ENCODE measurements at regions of chr22 and their contacts with region 1.

Region 1: DNA sequence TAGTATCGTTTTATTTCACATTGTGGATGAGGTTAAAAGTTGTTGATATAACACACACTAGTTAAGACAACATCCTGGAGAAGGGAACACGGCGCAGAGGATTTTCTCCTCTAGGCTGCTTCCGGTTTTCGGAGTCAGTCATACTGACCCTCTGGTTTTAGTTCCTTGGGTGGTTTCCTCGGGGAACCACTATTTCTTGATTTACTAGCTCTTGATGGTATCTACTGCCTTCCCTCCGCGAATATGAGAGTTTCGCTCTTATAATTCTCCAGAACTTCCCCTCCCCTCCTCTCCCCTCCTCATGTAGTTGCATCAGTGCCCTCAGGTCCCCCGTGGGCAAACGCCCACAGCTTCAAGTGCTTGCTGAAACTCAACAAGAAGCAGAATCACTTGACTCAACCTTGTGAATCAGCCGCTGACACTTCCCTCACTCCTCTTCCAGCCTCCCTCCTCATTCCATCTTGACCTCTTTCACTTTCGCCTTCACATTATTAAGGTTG is 15.9 kb upstream of the APOBEC3A start:
- DNase-seq: peak; percentile 63 to 90 (median 87)
- H3K4me3 ChIP-seq: peak overlapping the region in 6 of 7 experiments; percentile 20 to 76 (median 54)
- H3K27ac ChIP-seq: no peak overlapping the region
- H3K4me1 ChIP-seq: peaks cover 16 to 28% (median 27%) of the 10 kb centered on the region in 4 experiments
- H3K27me3 ChIP-seq: peaks cover 0 to 6% (median 0%) of the 10 kb centered on the region in 5 experiments

Region 2: GRCh38 chr22:38843201-38843715 is 98.3 kb before region 1 on chr22:
- CTCF ChIA-PET with region 1: no interaction called
- POLR2A ChIA-PET with region 1: no interaction called
- DNase-seq: peak; percentile 78 to 89 (median 87)
- H3K4me3 ChIP-seq: peak overlapping the region; percentile 11 to 68 (median 53)
- H3K27ac ChIP-seq: no peak overlapping the region
- H3K4me1 ChIP-seq: peaks cover 0 to 21% (median 15%) of the 10 kb centered on the region in 4 experiments
- H3K27me3 ChIP-seq: peaks cover 0 to 41% (median 35%) of the 10 kb centered on the region in 5 experiments

Region 3: DNA sequence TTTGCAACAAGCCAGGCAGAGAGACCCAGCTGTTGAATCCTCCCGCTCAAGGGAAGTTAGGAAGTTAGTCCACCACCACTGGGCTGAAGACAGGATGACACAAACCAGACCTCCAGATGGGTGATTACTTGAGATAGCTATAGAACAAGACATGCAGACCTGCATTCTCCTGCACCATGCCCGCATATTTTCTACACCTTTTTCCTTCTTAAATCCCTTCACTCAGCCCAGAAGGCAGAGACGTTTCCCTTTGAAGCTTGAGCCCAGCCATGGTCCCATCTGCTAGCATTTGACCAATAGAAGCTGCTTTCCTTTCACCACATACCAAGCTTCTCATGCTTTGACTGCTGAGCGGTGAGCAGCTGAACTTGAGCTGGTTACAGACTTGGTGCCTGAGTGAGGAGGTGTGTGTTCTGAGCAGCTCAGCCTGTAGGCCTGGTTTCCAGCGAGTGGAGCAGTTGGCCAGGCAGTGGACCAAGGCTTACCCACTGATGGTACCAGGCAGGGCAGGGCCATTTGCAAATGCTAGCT is 40.4 kb before region 1 on chr22:
- CTCF ChIA-PET with region 1: no interaction called
- POLR2A ChIA-PET with region 1: no interaction called
- DNase-seq: peak in 2 of 3 donors; percentile 26 to 43
- H3K4me3 ChIP-seq: no peak overlapping the region
- H3K27ac ChIP-seq: no peak overlapping the region
- H3K4me1 ChIP-seq: peaks cover 0 to 19% (median 6%) of the 10 kb centered on the region in 4 experiments
- H3K27me3 ChIP-seq: no peaks in the 10 kb centered on the region

Region 4: GRCh38 chr22:38911434-38911833 is 30.1 kb before region 1 on chr22:
- CTCF ChIA-PET with region 1: no interaction called
- POLR2A ChIA-PET with region 1: no interaction called
- DNase-seq: no peak
- H3K4me3 ChIP-seq: no peak overlapping the region
- H3K27ac ChIP-seq: no peak overlapping the region
- H3K4me1 ChIP-seq: no peaks in the 10 kb centered on the region
- H3K27me3 ChIP-seq: peaks cover 0 to 8% (median 0%) of the 10 kb centered on the region in 5 experiments

Region 5: GRCh38 chr22:38927033-38927781 is 14.3 kb before region 1 on chr22:
- CTCF ChIA-PET with region 1: interaction called, 19 read pairs
- POLR2A ChIA-PET with region 1: no interaction called
- DNase-seq: peak; percentile 67 to 74 (median 74)
- H3K4me3 ChIP-seq: peak overlapping the region in 2 of 7 experiments; percentile 36 to 45
- H3K27ac ChIP-seq: no peak overlapping the region
- H3K4me1 ChIP-seq: peaks cover 0 to 12% (median 0%) of the 10 kb centered on the region in 4 experiments
- H3K27me3 ChIP-seq: peaks cover 0 to 24% (median 4%) of the 10 kb centered on the region in 5 experiments